ENCODE measurements at regions of chr6 and their contacts with region 1.

Region 1: GRCh38 chr6:31665501-31666336 is at the start of gene CSNK2B:
- DNase-seq: peak; percentile 87 to 99 (median 98)
- ATAC-seq: peak; percentile 94
- H3K4me3 ChIP-seq: peak within 1 kb of the TSS; percentile 91
- H3K4me3 Mint-ChIP-seq: peak within 1 kb of the TSS; percentile 93 to 99 (median 96)
- H3K27ac ChIP-seq: peak within 1 kb of the TSS; percentile 97
- H3K27ac Mint-ChIP-seq: peak within 1 kb of the TSS; percentile 94 to 99 (median 98)
- H3K4me1 ChIP-seq: peaks cover 33 to 43% of the 10 kb centered on the region in 2 donors
- H3K4me1 Mint-ChIP-seq: peaks cover 25 to 75% (median 64%) of the 10 kb centered on the region in 7 donors
- H3K27me3 ChIP-seq: no peaks in the 10 kb centered on the region
- H3K27me3 Mint-ChIP-seq: peaks cover 0 to 2% (median 0%) of the 10 kb centered on the region in 5 donors
- total RNA-seq, gene CSNK2B: 101 to 215 (median 133) TPM

Region 2: GRCh38 chr6:31546962-31547726 is 118.6 kb before region 1 on chr6 and contains the start of gene NFKBIL1:
- CTCF ChIA-PET with region 1: no interaction called
- POLR2A ChIA-PET with region 1: interaction called, 7 read pairs
- intact Hi-C with region 1: loop called (anchors 1 kb)
- DNase-seq: peak; percentile 53 to 90 (median 84)
- ATAC-seq: peak; percentile 91
- H3K4me3 ChIP-seq: peak within 1 kb of the TSS; percentile 68
- H3K4me3 Mint-ChIP-seq: peak within 1 kb of the TSS; percentile 81 to 97 (median 91)
- H3K27ac ChIP-seq: peak within 1 kb of the TSS; percentile 89
- H3K27ac Mint-ChIP-seq: peak within 1 kb of the TSS; percentile 78 to 98 (median 95)
- H3K4me1 ChIP-seq: peaks cover 22 to 31% of the 10 kb centered on the region in 2 donors
- H3K4me1 Mint-ChIP-seq: peaks cover 22 to 57% (median 48%) of the 10 kb centered on the region in 7 donors
- H3K27me3 ChIP-seq: no peaks in the 10 kb centered on the region
- H3K27me3 Mint-ChIP-seq: no peaks in the 10 kb centered on the region
- total RNA-seq, gene NFKBIL1: 8.7 to 17.2 (median 11.6) TPM

Region 3: GRCh38 chr6:31702819-31703522 is 37.3 kb after region 1 on chr6 and contains the start of gene ABHD16A:
- CTCF ChIA-PET with region 1: no interaction called
- POLR2A ChIA-PET with region 1: interaction called, 9 read pairs
- intact Hi-C with region 1: loop called (anchors 1 kb)
- DNase-seq: peak; percentile 93 to 97 (median 96)
- ATAC-seq: peak; percentile 95
- H3K4me3 ChIP-seq: peak within 1 kb of the TSS; percentile 98
- H3K4me3 Mint-ChIP-seq: peak within 1 kb of the TSS; percentile 92 to 100 (median 98)
- H3K27ac ChIP-seq: peak within 1 kb of the TSS; percentile 98
- H3K27ac Mint-ChIP-seq: peak within 1 kb of the TSS; percentile 95 to 98 (median 97)
- H3K4me1 ChIP-seq: peaks cover 21 to 28% of the 10 kb centered on the region in 2 donors
- H3K4me1 Mint-ChIP-seq: peaks cover 16 to 39% (median 31%) of the 10 kb centered on the region in 7 donors
- H3K27me3 ChIP-seq: no peaks in the 10 kb centered on the region
- H3K27me3 Mint-ChIP-seq: peaks cover 0 to 2% (median 0%) of the 10 kb centered on the region in 5 donors
- total RNA-seq, gene ABHD16A: 60.1 to 71.7 (median 65.2) TPM

Region 4: GRCh38 chr6:31827286-31828079 is 161.8 kb after region 1 on chr6 and contains the start of gene HSPA1B:
- CTCF ChIA-PET with region 1: no interaction called
- POLR2A ChIA-PET with region 1: interaction called, 10 read pairs
- intact Hi-C with region 1: loop called (anchors 1 kb)
- DNase-seq: peak; percentile 55 to 96 (median 82)
- ATAC-seq: peak; percentile 80
- H3K4me3 ChIP-seq: peak within 1 kb of the TSS; percentile 74
- H3K4me3 Mint-ChIP-seq: peak within 1 kb of the TSS; percentile 85 to 97 (median 90)
- H3K27ac ChIP-seq: peak within 1 kb of the TSS; percentile 72
- H3K27ac Mint-ChIP-seq: peak within 1 kb of the TSS; percentile 93 to 99 (median 97)
- H3K4me1 ChIP-seq: peaks cover 12 to 17% of the 10 kb centered on the region in 2 donors
- H3K4me1 Mint-ChIP-seq: peaks cover 11 to 51% (median 46%) of the 10 kb centered on the region in 7 donors
- H3K27me3 ChIP-seq: no peaks in the 10 kb centered on the region
- H3K27me3 Mint-ChIP-seq: no peaks in the 10 kb centered on the region
- total RNA-seq, gene HSPA1B: 8.6 to 68.9 (median 28.9) TPM

Region 5: DNA sequence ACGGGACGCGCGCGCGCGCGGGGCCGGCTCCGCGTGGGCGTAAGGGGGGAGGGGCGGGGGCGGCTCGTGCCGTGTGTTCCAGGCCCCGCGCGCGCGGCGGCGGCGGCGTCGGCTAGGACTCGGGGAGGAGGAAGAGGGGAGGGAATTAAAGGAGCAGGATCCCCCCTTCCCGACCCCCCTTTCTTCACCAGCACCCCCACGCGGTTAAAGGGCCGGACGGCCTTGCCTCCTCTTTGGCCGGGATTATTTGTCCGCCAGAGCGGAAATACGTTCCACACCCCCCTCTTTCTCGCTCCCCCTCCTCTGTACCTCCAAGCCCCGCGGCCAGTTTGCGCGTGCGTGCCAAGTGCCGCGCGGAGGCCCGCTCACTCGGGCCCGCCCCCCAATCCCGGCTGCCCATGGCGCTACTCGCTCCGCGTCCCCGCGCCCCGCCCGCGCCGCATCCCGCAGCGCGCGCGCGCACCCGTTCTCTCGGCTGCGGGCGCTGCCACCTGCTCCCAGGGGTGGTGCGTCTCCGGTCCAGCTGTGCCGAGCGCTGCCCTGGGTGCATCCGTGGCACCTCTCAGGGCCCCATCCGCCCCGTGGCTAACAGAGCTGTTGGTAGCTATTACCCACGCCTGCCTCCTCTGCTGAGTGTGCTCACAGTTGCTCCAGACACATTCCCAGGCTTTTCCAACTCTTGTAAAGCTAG is 236.4 kb after region 1 on chr6 and contains the start of gene ZBTB12:
- CTCF ChIA-PET with region 1: no interaction called
- POLR2A ChIA-PET with region 1: interaction called, 11 read pairs
- intact Hi-C with region 1: loop called (anchors 1 kb)
- DNase-seq: peak; percentile 76 to 90 (median 84)
- ATAC-seq: peak; percentile 76
- H3K4me3 ChIP-seq: peak within 1 kb of the TSS; percentile 80
- H3K4me3 Mint-ChIP-seq: peak within 1 kb of the TSS; percentile 81 to 96 (median 88)
- H3K27ac ChIP-seq: peak within 1 kb of the TSS; percentile 83
- H3K27ac Mint-ChIP-seq: peak within 1 kb of the TSS; percentile 75 to 94 (median 86)
- H3K4me1 ChIP-seq: peaks cover 12 to 16% of the 10 kb centered on the region in 2 donors
- H3K4me1 Mint-ChIP-seq: peaks cover 18 to 34% (median 32%) of the 10 kb centered on the region in 7 donors
- H3K27me3 ChIP-seq: no peaks in the 10 kb centered on the region
- H3K27me3 Mint-ChIP-seq: peaks cover 0 to 11% (median 0%) of the 10 kb centered on the region in 5 donors
- total RNA-seq, gene ZBTB12: 0.77 to 4.5 (median 2.5) TPM

Region 6: GRCh38 chr6:33417903-33418689 is 1752.4 kb after region 1 on chr6 and contains the start of gene CUTA:
- CTCF ChIA-PET with region 1: no interaction called
- POLR2A ChIA-PET with region 1: no interaction called
- intact Hi-C with region 1: loop called in 1 of 2 experiments (anchors 10 kb)
- DNase-seq: peak; percentile 91 to 100 (median 99)
- ATAC-seq: peak; percentile 92
- H3K4me3 ChIP-seq: peak within 1 kb of the TSS; percentile 74
- H3K4me3 Mint-ChIP-seq: peak within 1 kb of the TSS; percentile 88 to 97 (median 94)
- H3K27ac ChIP-seq: peak within 1 kb of the TSS; percentile 94
- H3K27ac Mint-ChIP-seq: peak within 1 kb of the TSS; percentile 98 to 100 (median 99)
- H3K4me1 ChIP-seq: peaks cover 31 to 54% of the 10 kb centered on the region in 2 donors
- H3K4me1 Mint-ChIP-seq: peaks cover 60 to 89% (median 73%) of the 10 kb centered on the region in 7 donors
- H3K27me3 ChIP-seq: no peaks in the 10 kb centered on the region
- H3K27me3 Mint-ChIP-seq: no peaks in the 10 kb centered on the region
- total RNA-seq, gene CUTA: 148 to 235 (median 158) TPM